ENCODE measurements at regions of chr9 and their contacts with region 1.

Region 1: GRCh38 chr9:72038890-72039410 is 21.5 kb downstream of the C9orf57 start:
- DNase-seq: peak; percentile 80
- H3K4me3 Mint-ChIP-seq: no peak overlapping the region
- H3K27ac Mint-ChIP-seq: no peak overlapping the region
- H3K4me1 Mint-ChIP-seq: peaks cover 4% of the 10 kb centered on the region
- H3K27me3 Mint-ChIP-seq: peaks cover 6% of the 10 kb centered on the region

Region 2: DNA sequence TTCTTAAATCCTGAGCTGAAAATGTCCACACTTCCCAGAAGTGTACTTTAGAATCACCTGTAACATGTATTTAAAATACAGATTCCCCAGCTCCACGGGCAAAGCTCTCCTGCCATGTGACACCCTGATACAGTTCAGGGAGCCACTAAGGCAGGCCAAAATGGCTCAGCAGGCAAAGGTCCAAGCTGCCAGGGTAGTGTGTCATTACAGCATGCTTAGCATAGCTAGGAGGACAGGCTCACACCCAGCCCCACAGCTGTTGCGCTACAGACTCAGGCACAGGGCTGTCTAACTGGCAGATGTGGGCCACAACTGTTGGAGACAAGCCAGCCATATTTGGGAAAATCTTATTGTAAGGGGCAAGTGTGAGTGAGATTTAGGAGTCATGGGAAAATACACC is 54.5 kb before region 1 on chr9:
- CTCF ChIA-PET with region 1: no interaction called
- intact Hi-C with region 1: no loop called
- DNase-seq: no peak
- H3K4me3 Mint-ChIP-seq: no peak overlapping the region
- H3K27ac Mint-ChIP-seq: no peak overlapping the region
- H3K4me1 Mint-ChIP-seq: no peaks in the 10 kb centered on the region
- H3K27me3 Mint-ChIP-seq: no peaks in the 10 kb centered on the region

Region 3: GRCh38 chr9:72203205-72203803 is 164.4 kb after region 1 on chr9:
- CTCF ChIA-PET with region 1: interaction called, 8 read pairs
- intact Hi-C with region 1: loop called (anchors 5 kb)
- DNase-seq: peak; percentile 18
- H3K4me3 Mint-ChIP-seq: no peak overlapping the region
- H3K27ac Mint-ChIP-seq: no peak overlapping the region
- H3K4me1 Mint-ChIP-seq: no peaks in the 10 kb centered on the region
- H3K27me3 Mint-ChIP-seq: peaks cover 3% of the 10 kb centered on the region

Region 4: DNA sequence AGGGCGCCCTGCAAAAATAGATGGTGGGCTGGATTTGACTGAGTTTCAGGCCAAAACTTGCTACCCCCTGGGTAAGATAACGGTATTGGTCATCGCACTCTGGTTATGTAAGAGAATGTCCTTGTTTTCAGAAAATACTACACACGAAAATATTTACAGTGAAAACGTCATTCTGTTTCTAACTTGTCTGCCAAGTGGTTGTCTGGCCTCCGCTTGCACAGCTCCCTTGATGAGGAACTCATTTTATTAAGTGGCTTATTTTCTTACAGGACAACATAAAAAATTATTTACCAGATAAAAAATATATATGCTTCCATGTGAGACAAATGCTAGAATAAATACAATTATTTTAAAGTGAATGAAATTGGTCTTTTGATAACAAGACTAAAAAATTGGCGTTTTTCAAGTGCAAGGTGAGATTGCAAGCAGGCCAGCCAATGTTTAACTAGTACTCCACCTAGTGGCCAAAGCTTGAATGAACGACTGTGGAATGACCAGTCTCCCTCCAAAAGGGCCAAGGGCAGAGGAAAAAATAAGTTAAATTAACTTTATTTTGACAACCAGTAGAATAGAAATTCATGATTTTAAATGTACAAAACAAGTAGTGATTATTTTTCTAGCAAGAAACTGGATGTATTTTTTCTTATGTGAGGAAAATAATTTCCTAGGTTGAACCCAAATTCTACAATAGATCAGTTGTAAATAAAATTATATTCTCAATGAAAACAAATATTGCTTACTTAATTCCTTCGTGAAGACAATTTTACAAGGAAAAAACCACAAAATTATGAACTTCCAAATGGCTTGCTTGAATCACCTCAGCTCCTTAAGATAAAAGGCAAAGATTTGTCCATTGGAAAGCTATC is 232.9 kb after region 1 on chr9:
- CTCF ChIA-PET with region 1: interaction called, 90 read pairs
- intact Hi-C with region 1: loop called (anchors 1 kb)
- DNase-seq: peak; percentile 69
- H3K4me3 Mint-ChIP-seq: no peak overlapping the region
- H3K27ac Mint-ChIP-seq: no peak overlapping the region
- H3K4me1 Mint-ChIP-seq: no peaks in the 10 kb centered on the region
- H3K27me3 Mint-ChIP-seq: no peaks in the 10 kb centered on the region

Region 5: GRCh38 chr9:72827950-72828731 is 789.2 kb after region 1 on chr9:
- CTCF ChIA-PET with region 1: no interaction called
- intact Hi-C with region 1: loop called (anchors 2 kb)
- DNase-seq: no peak
- H3K4me3 Mint-ChIP-seq: no peak overlapping the region
- H3K27ac Mint-ChIP-seq: no peak overlapping the region
- H3K4me1 Mint-ChIP-seq: no peaks in the 10 kb centered on the region
- H3K27me3 Mint-ChIP-seq: no peaks in the 10 kb centered on the region

Region 6: DNA sequence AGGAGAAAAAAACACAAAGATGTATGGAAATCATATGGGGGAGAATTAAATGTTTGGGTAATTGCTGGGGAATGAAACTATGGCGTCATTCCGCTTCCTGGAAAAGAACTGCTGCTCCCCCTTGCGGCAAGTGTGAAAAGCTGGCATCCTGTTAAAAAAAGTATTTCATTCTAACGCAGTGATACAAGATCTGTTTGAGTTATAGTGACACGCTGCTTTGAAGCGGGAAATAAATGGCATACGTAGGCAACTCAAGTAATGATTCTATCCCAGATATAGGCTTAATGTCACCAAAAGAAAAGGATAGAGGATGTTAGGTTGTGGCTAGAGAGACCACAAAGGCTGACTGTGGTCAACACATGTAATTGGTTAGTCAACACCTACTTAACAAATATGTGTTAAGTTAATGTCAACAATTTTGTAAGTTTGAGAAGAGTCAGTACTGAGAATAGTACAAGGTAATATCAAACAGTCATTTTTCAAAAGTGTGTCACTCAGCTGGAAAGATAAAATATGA is 984.1 kb after region 1 on chr9:
- CTCF ChIA-PET with region 1: no interaction called
- intact Hi-C with region 1: loop called (anchors 1 kb)
- DNase-seq: peak; percentile 68
- H3K4me3 Mint-ChIP-seq: no peak overlapping the region
- H3K27ac Mint-ChIP-seq: no peak overlapping the region
- H3K4me1 Mint-ChIP-seq: peaks cover 6% of the 10 kb centered on the region
- H3K27me3 Mint-ChIP-seq: peaks cover 15% of the 10 kb centered on the region

Region 7: DNA sequence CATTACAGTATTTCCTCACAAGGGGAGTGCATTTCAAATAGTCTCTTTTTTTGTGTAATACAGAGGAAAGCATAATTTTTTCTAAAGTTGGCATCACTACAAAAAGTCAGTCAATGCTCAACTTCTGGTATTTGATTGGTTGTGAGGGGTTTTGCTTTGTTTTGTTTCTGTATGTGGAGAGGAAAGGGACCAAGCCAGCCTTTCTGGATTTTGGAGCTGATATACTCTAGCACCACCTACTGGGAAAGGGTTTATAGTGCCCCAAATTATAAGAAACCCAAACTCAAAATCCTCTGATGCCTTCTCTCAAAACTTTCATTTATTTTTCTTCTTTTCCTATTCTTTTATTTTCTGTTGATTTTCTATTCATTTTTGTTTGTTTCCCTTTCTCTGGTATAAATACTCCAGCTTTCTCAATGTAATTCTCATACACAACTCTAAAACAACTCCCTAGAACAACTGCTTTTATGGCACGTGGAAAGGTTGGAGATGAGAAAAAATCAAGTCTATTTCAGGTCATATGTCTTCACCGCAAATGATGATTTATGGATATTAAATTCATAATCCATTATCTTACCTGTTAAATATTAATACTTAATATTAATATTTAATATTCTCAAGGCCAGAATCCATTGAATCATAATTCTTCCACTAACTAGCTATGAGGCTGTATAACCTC is 1043.2 kb after region 1 on chr9:
- CTCF ChIA-PET with region 1: no interaction called
- intact Hi-C with region 1: loop called (anchors 1 kb)
- DNase-seq: no peak
- H3K4me3 Mint-ChIP-seq: no peak overlapping the region
- H3K27ac Mint-ChIP-seq: no peak overlapping the region
- H3K4me1 Mint-ChIP-seq: no peaks in the 10 kb centered on the region
- H3K27me3 Mint-ChIP-seq: peaks cover 6% of the 10 kb centered on the region